H1 (cell line): ENCODE measurements at regions of chr20 and their contacts with region 1.

Region 1: GRCh38 chr20:2671977-2672376 is 8.0 kb upstream of the IDH3B start:
- DNase-seq: peak in 1 of 2 experiments; percentile 72
- H3K4me3 ChIP-seq: no peak overlapping the region
- H3K27ac ChIP-seq: no peak overlapping the region
- H3K4me1 ChIP-seq: 0 out of 7 replicates have a peak, but pooled peaks cover 0 to 4% (median 0%) of the 10 kb centered on the region in 4 experiments
- H3K27me3 ChIP-seq: no peaks in the 10 kb centered on the region; a peak in 3 of 7 replicates
- CTCF ChIP-seq: peak; percentile 69 to 81 (median 80)
- EP300 ChIP-seq: no peak
- POLR2A ChIP-seq: no peak
- RAD21 ChIP-seq: peak; percentile 20 to 47; a peak in 2 of 4 replicates

Region 2: DNA sequence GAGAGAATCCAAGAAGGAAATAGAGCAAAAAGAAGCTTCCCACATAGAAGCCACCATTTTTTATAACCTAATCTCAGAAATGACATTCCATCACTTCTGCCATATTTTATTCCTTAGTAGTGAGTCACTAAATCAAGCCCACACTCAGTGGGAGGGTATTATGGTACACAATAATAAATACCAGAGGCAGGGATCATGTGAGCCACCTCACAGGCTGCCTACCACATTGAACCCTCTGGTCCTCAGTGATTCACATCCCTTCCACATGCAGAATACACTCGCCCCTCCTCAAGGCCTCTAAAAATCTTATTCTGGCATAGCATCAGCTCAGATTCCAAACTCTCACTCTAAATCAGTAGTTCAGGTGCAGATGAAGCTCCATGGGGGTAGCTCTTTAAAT is 86.2 kb before region 1 on chr20:
- CTCF ChIA-PET with region 1: no interaction called
- POLR2A ChIA-PET with region 1: no interaction called
- DNase-seq: peak in 1 of 2 experiments; percentile 2
- H3K4me3 ChIP-seq: no peak overlapping the region
- H3K27ac ChIP-seq: no peak overlapping the region
- H3K4me1 ChIP-seq: no peaks in the 10 kb centered on the region
- H3K27me3 ChIP-seq: no peaks in the 10 kb centered on the region
- CTCF ChIP-seq: no peak
- EP300 ChIP-seq: no peak
- POLR2A ChIP-seq: no peak
- RAD21 ChIP-seq: no peak

Region 3: GRCh38 chr20:2658414-2659354 is 13.3 kb before region 1 on chr20:
- CTCF ChIA-PET with region 1: interaction called, 4 read pairs
- POLR2A ChIA-PET with region 1: interaction called, 463 read pairs
- DNase-seq: peak in 1 of 2 experiments; percentile 52
- H3K4me3 ChIP-seq: no peak overlapping the region
- H3K27ac ChIP-seq: no peak overlapping the region
- H3K4me1 ChIP-seq: peaks cover 0 to 9% (median 3%) of the 10 kb centered on the region in 4 experiments; a peak in 6 of 7 replicates
- H3K27me3 ChIP-seq: no peaks in the 10 kb centered on the region
- CTCF ChIP-seq: no peak
- EP300 ChIP-seq: no peak
- POLR2A ChIP-seq: peak; percentile 74 to 81; a peak in 2 of 3 replicates
- RAD21 ChIP-seq: no peak

Region 4: GRCh38 chr20:2840138-2840966 is 168.4 kb after region 1 on chr20 and contains the starts of genes PCED1A and VPS16:
- CTCF ChIA-PET with region 1: no interaction called
- POLR2A ChIA-PET with region 1: no interaction called
- DNase-seq: peak; percentile 49 to 93
- H3K4me3 ChIP-seq: peak within 1 kb of the TSS; percentile 64 to 93 (median 71)
- H3K27ac ChIP-seq: no peak within 1 kb of the TSS
- H3K4me1 ChIP-seq: no peaks in the 10 kb centered on the region; a peak in 1 of 7 replicates
- H3K27me3 ChIP-seq: peaks cover 5 to 20% (median 17%) of the 10 kb centered on the region in 4 experiments
- CTCF ChIP-seq: no peak
- EP300 ChIP-seq: no peak
- POLR2A ChIP-seq: peak in 1 of 2 experiments; percentile 59; a peak in 2 of 3 replicates
- RAD21 ChIP-seq: no peak
- total RNA-seq, gene PCED1A: 13.4 and 14.6 TPM in 2 replicates
- total RNA-seq, gene VPS16: 22.6 and 25.9 TPM in 2 replicates